ENCODE measurements at regions of chr15 and their contacts with region 1.

Region 1: DNA sequence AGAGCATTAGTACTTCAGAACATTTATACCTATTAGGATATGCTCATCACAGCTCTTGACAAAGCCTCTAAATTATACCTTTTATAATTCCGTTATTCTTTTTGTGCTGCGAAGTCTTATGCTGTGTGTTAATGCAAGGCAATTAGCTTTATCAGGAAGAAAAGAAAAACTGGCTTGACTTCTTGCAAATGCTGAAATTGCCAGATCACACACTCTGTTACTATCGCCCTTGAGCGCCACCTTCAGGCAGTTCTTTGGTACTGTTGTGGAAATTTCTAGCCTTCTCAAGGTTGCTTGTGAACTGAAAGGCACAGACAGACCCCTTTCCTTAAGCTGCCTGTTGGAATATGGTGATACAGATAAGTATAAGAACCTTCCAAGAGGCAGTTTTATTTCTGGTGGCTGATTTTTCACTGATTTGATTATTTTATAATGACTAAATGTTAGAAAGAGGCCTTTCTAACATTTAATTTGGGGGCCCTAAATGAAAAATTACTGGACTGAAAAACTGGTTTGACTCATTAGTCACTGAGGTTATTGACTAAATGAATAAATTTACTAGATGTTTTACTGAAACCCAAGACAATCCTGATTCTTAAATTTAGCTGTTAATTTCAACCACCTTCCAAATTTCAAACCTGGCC is 126.2 kb upstream of the RASGRP1 start:
- DNase-seq: peak; percentile 87
- H3K4me3 Mint-ChIP-seq: peak overlapping the region; percentile 31
- H3K27ac Mint-ChIP-seq: peak overlapping the region; percentile 71
- H3K4me1 Mint-ChIP-seq: peaks cover 87% of the 10 kb centered on the region
- H3K27me3 Mint-ChIP-seq: no peaks in the 10 kb centered on the region

Region 2: GRCh38 chr15:38252481-38253412 is 438.1 kb before region 1 on chr15 and contains the start of gene SPRED1:
- CTCF ChIA-PET with region 1: interaction called, 3 read pairs
- POLR2A ChIA-PET with region 1: no interaction called
- intact Hi-C with region 1: loop called (anchors 2 kb)
- DNase-seq: peak; percentile 33
- H3K4me3 Mint-ChIP-seq: peak within 1 kb of the TSS; percentile 75
- H3K27ac Mint-ChIP-seq: peak within 1 kb of the TSS; percentile 4
- H3K4me1 Mint-ChIP-seq: peaks cover 25% of the 10 kb centered on the region
- H3K27me3 Mint-ChIP-seq: peaks cover 18% of the 10 kb centered on the region
- total RNA-seq, gene SPRED1: 0.92 to 0.97 TPM

Region 3: GRCh38 chr15:38389924-38390542 is 300.8 kb before region 1 on chr15:
- CTCF ChIA-PET with region 1: no interaction called
- POLR2A ChIA-PET with region 1: no interaction called
- intact Hi-C with region 1: no loop called
- DNase-seq: peak; percentile 74
- H3K4me3 Mint-ChIP-seq: no peak overlapping the region
- H3K27ac Mint-ChIP-seq: no peak overlapping the region
- H3K4me1 Mint-ChIP-seq: no peaks in the 10 kb centered on the region
- H3K27me3 Mint-ChIP-seq: peaks cover 9% of the 10 kb centered on the region

Region 4: GRCh38 chr15:38453971-38454695 is 236.7 kb before region 1 on chr15 and contains the start of gene FAM98B:
- CTCF ChIA-PET with region 1: interaction called, 56 read pairs
- POLR2A ChIA-PET with region 1: interaction called, 10 read pairs
- intact Hi-C with region 1: no loop called
- DNase-seq: peak; percentile 93
- H3K4me3 Mint-ChIP-seq: peak within 1 kb of the TSS; percentile 93
- H3K27ac Mint-ChIP-seq: peak within 1 kb of the TSS; percentile 89
- H3K4me1 Mint-ChIP-seq: peaks cover 22% of the 10 kb centered on the region
- H3K27me3 Mint-ChIP-seq: no peaks in the 10 kb centered on the region
- total RNA-seq, gene FAM98B: 40.2 to 44.7 TPM

Region 5: GRCh38 chr15:38479266-38479665 is 211.5 kb before region 1 on chr15:
- CTCF ChIA-PET with region 1: interaction called, 33 read pairs
- POLR2A ChIA-PET with region 1: no interaction called
- intact Hi-C with region 1: loop called (anchors 1 kb)
- DNase-seq: no peak
- H3K4me3 Mint-ChIP-seq: no peak overlapping the region
- H3K27ac Mint-ChIP-seq: no peak overlapping the region
- H3K4me1 Mint-ChIP-seq: peaks cover 29% of the 10 kb centered on the region
- H3K27me3 Mint-ChIP-seq: no peaks in the 10 kb centered on the region

Region 6: DNA sequence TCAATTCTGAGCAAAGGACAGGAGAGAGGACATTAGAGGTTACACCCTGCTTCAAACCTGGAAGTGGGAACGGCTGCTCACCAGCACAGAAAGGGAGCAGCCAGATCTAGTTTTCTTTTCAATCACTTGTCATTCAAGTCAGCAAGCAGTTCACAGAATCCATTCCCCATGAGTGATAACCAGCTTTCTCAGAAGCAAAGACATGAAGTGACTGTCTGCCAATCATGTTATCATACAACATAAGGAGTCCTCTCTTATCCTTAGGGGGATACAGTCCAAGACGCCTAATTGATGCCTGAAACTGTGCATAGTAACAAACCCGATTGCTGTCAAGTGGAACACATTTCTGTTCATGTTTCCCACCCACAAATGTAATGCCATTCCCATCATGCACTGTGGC is 182.2 kb before region 1 on chr15:
- CTCF ChIA-PET with region 1: interaction called, 93 read pairs
- POLR2A ChIA-PET with region 1: interaction called, 4 read pairs
- intact Hi-C with region 1: no loop called
- DNase-seq: peak; percentile 55
- H3K4me3 Mint-ChIP-seq: no peak overlapping the region
- H3K27ac Mint-ChIP-seq: peak overlapping the region; percentile 88
- H3K4me1 Mint-ChIP-seq: peaks cover 38% of the 10 kb centered on the region
- H3K27me3 Mint-ChIP-seq: no peaks in the 10 kb centered on the region

Region 7: GRCh38 chr15:38531509-38531908 is 159.3 kb before region 1 on chr15:
- CTCF ChIA-PET with region 1: interaction called, 22 read pairs
- POLR2A ChIA-PET with region 1: interaction called, 3 read pairs
- intact Hi-C with region 1: no loop called
- DNase-seq: no peak
- H3K4me3 Mint-ChIP-seq: no peak overlapping the region
- H3K27ac Mint-ChIP-seq: peak overlapping the region; percentile 61
- H3K4me1 Mint-ChIP-seq: peaks cover 98% of the 10 kb centered on the region
- H3K27me3 Mint-ChIP-seq: no peaks in the 10 kb centered on the region

Region 8: GRCh38 chr15:38610748-38611147 is 80.1 kb before region 1 on chr15:
- CTCF ChIA-PET with region 1: interaction called, 151 read pairs
- POLR2A ChIA-PET with region 1: interaction called, 145 read pairs
- intact Hi-C with region 1: loop called (anchors 1 kb)
- DNase-seq: peak; percentile 80
- H3K4me3 Mint-ChIP-seq: peak overlapping the region; percentile 37
- H3K27ac Mint-ChIP-seq: peak overlapping the region; percentile 99
- H3K4me1 Mint-ChIP-seq: peaks cover 83% of the 10 kb centered on the region
- H3K27me3 Mint-ChIP-seq: no peaks in the 10 kb centered on the region

Region 9: GRCh38 chr15:39040861-39041260 is 350.1 kb after region 1 on chr15:
- CTCF ChIA-PET with region 1: no interaction called
- POLR2A ChIA-PET with region 1: no interaction called
- intact Hi-C with region 1: no loop called
- DNase-seq: no peak
- H3K4me3 Mint-ChIP-seq: no peak overlapping the region
- H3K27ac Mint-ChIP-seq: no peak overlapping the region
- H3K4me1 Mint-ChIP-seq: no peaks in the 10 kb centered on the region
- H3K27me3 Mint-ChIP-seq: peaks cover 2% of the 10 kb centered on the region